ENCODE measurements at regions of chr5 and their contacts with region 1.

Region 1: GRCh38 chr5:150350524-150351344 is 6.8 kb upstream of the TCOF1 start:
- DNase-seq: peak; percentile 74

Region 2: GRCh38 chr5:150272526-150272925 is 78.2 kb before region 1 on chr5:
- CTCF ChIA-PET with region 1: interaction called, 38 read pairs
- POLR2A ChIA-PET with region 1: no interaction called
- DNase-seq: peak; percentile 52

Measured in HEK293T (cell line).